CD8-positive, alpha-beta T cell (primary cell): ENCODE measurements at regions of chr2 and their contacts with region 1.

Region 1: GRCh38 chr2:68062680-68063387 is at the start of gene C1D:
- DNase-seq: peak; percentile 88 to 96 (median 93)
- ATAC-seq: peak; percentile 89
- H3K4me3 ChIP-seq: peak within 1 kb of the TSS; percentile 66 to 91
- H3K4me3 Mint-ChIP-seq: peak within 1 kb of the TSS; percentile 96
- H3K27ac ChIP-seq: peak within 1 kb of the TSS; percentile 95 to 96
- H3K27ac Mint-ChIP-seq: peak within 1 kb of the TSS; percentile 98
- H3K4me1 ChIP-seq: peaks cover 30% of the 10 kb centered on the region
- H3K4me1 Mint-ChIP-seq: peaks cover 48% of the 10 kb centered on the region
- H3K27me3 ChIP-seq: no peaks in the 10 kb centered on the region
- H3K27me3 Mint-ChIP-seq: peaks cover 4% of the 10 kb centered on the region
- CTCF ChIP-seq: no peak
- total RNA-seq, gene C1D: 30.1 to 32.7 TPM

Region 2: GRCh38 chr2:67397143-67397986 is 665.5 kb before region 1 on chr2 and contains the start of gene ETAA1:
- CTCF ChIA-PET with region 1: no interaction called
- POLR2A ChIA-PET with region 1: no interaction called
- intact Hi-C with region 1: loop called in 1 of 2 experiments (anchors 2 kb)
- DNase-seq: peak; percentile 87 to 95 (median 94)
- ATAC-seq: peak; percentile 97
- H3K4me3 ChIP-seq: peak within 1 kb of the TSS; percentile 61 to 90
- H3K4me3 Mint-ChIP-seq: peak within 1 kb of the TSS; percentile 97
- H3K27ac ChIP-seq: peak within 1 kb of the TSS; percentile 84 to 86
- H3K27ac Mint-ChIP-seq: peak within 1 kb of the TSS; percentile 98
- H3K4me1 ChIP-seq: peaks cover 8% of the 10 kb centered on the region
- H3K4me1 Mint-ChIP-seq: peaks cover 21% of the 10 kb centered on the region
- H3K27me3 ChIP-seq: no peaks in the 10 kb centered on the region
- H3K27me3 Mint-ChIP-seq: no peaks in the 10 kb centered on the region
- CTCF ChIP-seq: no peak
- total RNA-seq, gene ETAA1: 7.7 to 8.6 TPM

Region 3: DNA sequence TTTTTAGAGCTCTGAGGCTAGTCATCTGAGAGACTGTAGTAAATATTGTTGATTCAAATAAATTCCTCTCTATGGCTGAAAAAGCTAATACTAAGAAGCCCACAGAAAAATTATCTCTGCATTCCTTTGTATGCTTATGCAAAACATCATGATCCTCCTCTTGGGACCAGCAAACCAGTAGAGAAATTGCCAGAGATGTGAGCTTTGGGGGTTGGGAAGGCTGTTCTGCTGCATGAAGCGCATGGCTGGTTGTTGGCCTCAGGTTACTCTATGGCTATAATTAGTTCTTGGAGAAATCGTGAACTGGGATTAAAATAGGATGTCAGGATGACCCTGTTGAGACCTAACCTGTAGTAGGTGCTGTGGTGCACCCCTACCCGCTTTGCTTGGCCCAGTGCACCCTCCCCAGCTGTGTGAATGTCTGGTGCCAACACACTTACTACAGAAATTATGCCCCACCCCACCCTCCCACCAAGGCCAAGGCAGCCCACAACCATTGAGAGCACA is 35.5 kb after region 1 on chr2:
- CTCF ChIA-PET with region 1: no interaction called
- POLR2A ChIA-PET with region 1: no interaction called
- intact Hi-C with region 1: no loop called
- DNase-seq: no peak
- ATAC-seq: no peak
- H3K4me3 ChIP-seq: no peak overlapping the region
- H3K4me3 Mint-ChIP-seq: no peak overlapping the region
- H3K27ac ChIP-seq: no peak overlapping the region
- H3K27ac Mint-ChIP-seq: no peak overlapping the region
- H3K4me1 ChIP-seq: no peaks in the 10 kb centered on the region
- H3K4me1 Mint-ChIP-seq: no peaks in the 10 kb centered on the region
- H3K27me3 ChIP-seq: no peaks in the 10 kb centered on the region
- H3K27me3 Mint-ChIP-seq: no peaks in the 10 kb centered on the region
- CTCF ChIP-seq: no peak